ENCODE measurements at regions of chr1 and their contacts with region 1.

Region 1: DNA sequence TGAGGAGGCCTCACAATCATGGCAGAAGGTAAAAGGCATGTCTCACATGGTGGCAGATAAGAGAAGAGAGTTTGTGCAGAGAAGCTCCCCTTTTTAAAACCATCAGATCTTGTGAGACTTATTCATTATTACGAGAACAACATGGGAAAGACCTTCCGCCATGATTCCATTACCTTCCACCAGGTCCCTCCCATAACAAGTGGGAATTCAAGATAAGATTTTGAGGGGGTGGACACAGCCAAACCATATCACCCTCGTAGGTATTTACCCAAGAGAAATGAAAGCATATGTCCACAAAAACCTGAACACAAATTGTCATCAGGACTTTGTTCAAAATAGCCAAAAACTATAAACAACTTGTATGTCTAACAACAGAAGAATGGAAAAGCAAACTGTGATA is 45.9 kb upstream of the TENT5C start:
- DNase-seq: no peak
- H3K4me3 ChIP-seq: no peak overlapping the region
- H3K27ac ChIP-seq: no peak overlapping the region
- H3K4me1 ChIP-seq: peaks cover 0 to 33% (median 7%) of the 10 kb centered on the region in 4 experiments
- H3K27me3 ChIP-seq: no peaks in the 10 kb centered on the region

Region 2: GRCh38 chr1:117284399-117285215 is 275.4 kb before region 1 on chr1:
- CTCF ChIA-PET with region 1: no interaction called
- POLR2A ChIA-PET with region 1: no interaction called
- DNase-seq: peak; percentile 29 to 56 (median 51)
- H3K4me3 ChIP-seq: no peak overlapping the region
- H3K27ac ChIP-seq: no peak overlapping the region
- H3K4me1 ChIP-seq: no peaks in the 10 kb centered on the region
- H3K27me3 ChIP-seq: no peaks in the 10 kb centered on the region

Region 3: GRCh38 chr1:117511273-117511672 is 48.7 kb before region 1 on chr1:
- CTCF ChIA-PET with region 1: no interaction called
- POLR2A ChIA-PET with region 1: no interaction called
- DNase-seq: no peak
- H3K4me3 ChIP-seq: no peak overlapping the region
- H3K27ac ChIP-seq: no peak overlapping the region
- H3K4me1 ChIP-seq: no peaks in the 10 kb centered on the region
- H3K27me3 ChIP-seq: no peaks in the 10 kb centered on the region

Region 4: GRCh38 chr1:117544509-117545109 is 15.4 kb before region 1 on chr1:
- CTCF ChIA-PET with region 1: interaction called, 5 read pairs
- POLR2A ChIA-PET with region 1: interaction called, 10 read pairs
- DNase-seq: no peak
- H3K4me3 ChIP-seq: no peak overlapping the region
- H3K27ac ChIP-seq: no peak overlapping the region
- H3K4me1 ChIP-seq: peaks cover 0 to 3% (median 0%) of the 10 kb centered on the region in 4 experiments
- H3K27me3 ChIP-seq: no peaks in the 10 kb centered on the region

Measured in common myeloid progenitor, CD34-positive (primary cell).